ENCODE measurements at regions of chr17 and their contacts with region 1.

Region 1: GRCh38 chr17:32444308-32445073 is at the start of gene PSMD11:
- DNase-seq: peak; percentile 99
- ATAC-seq: peak; percentile 99
- H3K4me3 Mint-ChIP-seq: peak within 1 kb of the TSS; percentile 95
- H3K27ac Mint-ChIP-seq: peak within 1 kb of the TSS; percentile 41
- H3K4me1 Mint-ChIP-seq: peaks cover 19% of the 10 kb centered on the region
- H3K27me3 Mint-ChIP-seq: peaks cover 29% of the 10 kb centered on the region
- CTCF ChIP-seq: no peak; the same call in none of the 2 replicates
- total RNA-seq, gene PSMD11: 133 to 155 TPM (median 146 TPM) in 3 replicates

Region 2: DNA sequence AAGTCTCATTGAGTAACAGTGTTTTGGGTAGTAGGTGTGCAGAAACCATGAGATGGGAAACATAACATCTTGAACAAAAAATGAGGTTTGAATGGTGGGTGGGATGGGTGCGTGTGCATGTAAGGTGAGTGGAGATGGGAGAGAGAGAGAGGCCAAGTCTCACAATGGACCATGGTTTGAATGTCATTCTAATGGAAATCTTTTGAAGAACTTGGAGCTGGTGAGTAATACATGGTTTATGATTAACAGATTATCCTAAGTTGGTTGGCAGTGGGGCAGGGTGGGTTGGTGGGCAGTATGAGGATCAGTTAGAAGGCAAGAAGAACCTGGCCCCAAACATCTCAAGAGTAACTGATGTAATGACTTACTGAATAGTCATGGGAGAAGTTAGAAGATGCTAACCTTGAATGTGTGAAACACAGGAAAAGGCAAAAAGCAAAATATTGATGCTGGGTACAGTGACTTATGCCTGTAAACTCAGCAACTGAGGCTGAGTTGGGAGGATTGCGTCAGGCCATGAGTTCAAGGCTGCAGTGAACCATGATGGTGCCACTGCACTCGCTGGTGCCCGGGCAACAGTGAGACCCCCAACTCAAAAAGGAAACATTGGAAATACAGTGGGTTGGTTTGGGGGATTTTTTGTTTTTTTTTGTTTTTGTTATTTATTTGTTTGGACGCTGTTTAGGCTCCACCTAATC is 61.8 kb before region 1 on chr17:
- CTCF ChIA-PET with region 1: interaction called, 10 read pairs
- POLR2A ChIA-PET with region 1: no interaction called
- DNase-seq: no peak
- ATAC-seq: no peak
- H3K4me3 Mint-ChIP-seq: no peak overlapping the region
- H3K27ac Mint-ChIP-seq: peak overlapping the region; percentile 81
- H3K4me1 Mint-ChIP-seq: no peaks in the 10 kb centered on the region
- H3K27me3 Mint-ChIP-seq: no peaks in the 10 kb centered on the region
- CTCF ChIP-seq: no peak

Region 3: GRCh38 chr17:32398946-32399345 is 45.5 kb before region 1 on chr17:
- CTCF ChIA-PET with region 1: interaction called, 19 read pairs
- POLR2A ChIA-PET with region 1: no interaction called
- DNase-seq: no peak
- ATAC-seq: no peak
- H3K4me3 Mint-ChIP-seq: no peak overlapping the region
- H3K27ac Mint-ChIP-seq: no peak overlapping the region
- H3K4me1 Mint-ChIP-seq: no peaks in the 10 kb centered on the region
- H3K27me3 Mint-ChIP-seq: no peaks in the 10 kb centered on the region
- CTCF ChIP-seq: no peak

Region 4: DNA sequence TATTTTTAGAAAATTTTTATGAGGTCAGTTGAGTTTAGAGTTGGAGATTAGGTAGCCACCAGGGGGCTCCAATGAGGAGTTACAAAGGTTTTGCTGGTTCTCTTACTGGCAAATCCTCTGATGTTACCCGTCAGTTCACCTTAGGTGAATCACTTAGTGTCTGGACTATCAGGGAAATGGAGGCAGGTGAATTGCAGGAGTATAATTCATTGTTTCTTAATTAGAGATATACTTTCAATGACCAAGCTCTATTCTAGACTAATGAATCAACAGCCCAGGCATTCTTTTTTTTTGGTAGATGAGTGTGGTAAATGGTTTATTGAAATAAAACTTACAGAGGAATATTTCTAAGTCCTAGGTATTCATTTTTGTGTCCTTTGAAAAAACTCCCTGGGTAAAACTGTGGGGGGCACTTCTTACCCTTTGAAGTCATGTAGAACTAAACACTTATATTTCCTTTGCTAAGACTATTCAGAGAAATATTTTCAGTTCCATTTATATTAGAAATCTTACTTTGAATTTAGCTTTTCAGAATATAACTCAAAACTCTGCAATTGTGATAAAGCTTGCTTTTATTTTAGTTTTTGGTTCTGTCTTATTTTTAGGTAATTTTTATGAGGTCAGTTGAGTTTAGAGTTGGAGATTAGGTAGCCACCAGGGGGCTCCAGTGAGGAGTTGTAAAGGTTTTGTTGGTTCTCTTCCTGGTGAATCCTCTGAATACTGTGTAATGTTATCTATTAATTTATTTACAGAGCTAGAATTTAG is 17.5 kb after region 1 on chr17:
- CTCF ChIA-PET with region 1: interaction called, 34 read pairs
- POLR2A ChIA-PET with region 1: no interaction called
- DNase-seq: peak; percentile 71
- ATAC-seq: peak; percentile 70
- H3K4me3 Mint-ChIP-seq: no peak overlapping the region
- H3K27ac Mint-ChIP-seq: no peak overlapping the region
- H3K4me1 Mint-ChIP-seq: no peaks in the 10 kb centered on the region
- H3K27me3 Mint-ChIP-seq: no peaks in the 10 kb centered on the region
- CTCF ChIP-seq: peak; percentile 26; the same call in 1 of the 2 replicates

Region 5: GRCh38 chr17:32486111-32486700 is 41.7 kb after region 1 on chr17:
- CTCF ChIA-PET with region 1: interaction called, 18 read pairs
- POLR2A ChIA-PET with region 1: interaction called, 8 read pairs
- DNase-seq: peak; percentile 71
- ATAC-seq: peak; percentile 73
- H3K4me3 Mint-ChIP-seq: peak overlapping the region; percentile 58
- H3K27ac Mint-ChIP-seq: peak overlapping the region; percentile 33; the same call in 1 of the 2 replicates
- H3K4me1 Mint-ChIP-seq: peaks cover 56% of the 10 kb centered on the region
- H3K27me3 Mint-ChIP-seq: no peaks in the 10 kb centered on the region
- CTCF ChIP-seq: no peak

Region 6: DNA sequence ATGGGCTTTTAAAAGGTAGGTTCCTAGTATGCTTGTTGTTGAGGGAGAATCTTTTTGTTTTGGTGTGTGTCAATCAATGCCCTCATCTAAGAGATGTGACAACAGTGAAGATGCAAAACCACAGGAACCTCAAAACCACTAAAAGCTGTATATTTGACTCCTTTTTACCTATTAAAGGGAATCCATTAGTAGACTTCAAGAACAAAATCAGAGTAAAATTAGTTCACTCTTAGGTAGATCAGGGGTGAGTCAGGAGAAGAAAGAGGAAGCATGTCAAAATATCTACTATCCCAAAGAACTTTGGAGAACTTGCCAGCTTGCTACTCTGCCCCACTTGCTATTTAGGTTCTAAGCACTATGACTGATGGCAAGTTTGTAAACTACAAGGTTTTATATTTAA is 131.4 kb after region 1 on chr17:
- CTCF ChIA-PET with region 1: no interaction called
- POLR2A ChIA-PET with region 1: no interaction called
- DNase-seq: no peak
- ATAC-seq: no peak
- H3K4me3 Mint-ChIP-seq: no peak overlapping the region
- H3K27ac Mint-ChIP-seq: no peak overlapping the region
- H3K4me1 Mint-ChIP-seq: no peaks in the 10 kb centered on the region; the same call in 1 of the 2 replicates
- H3K27me3 Mint-ChIP-seq: no peaks in the 10 kb centered on the region
- CTCF ChIP-seq: no peak

Measured in WTC11 (cell line).